CD4-positive, alpha-beta memory T cell (primary cell): ENCODE measurements at regions of chr11 and their contacts with region 1.

Region 1: DNA sequence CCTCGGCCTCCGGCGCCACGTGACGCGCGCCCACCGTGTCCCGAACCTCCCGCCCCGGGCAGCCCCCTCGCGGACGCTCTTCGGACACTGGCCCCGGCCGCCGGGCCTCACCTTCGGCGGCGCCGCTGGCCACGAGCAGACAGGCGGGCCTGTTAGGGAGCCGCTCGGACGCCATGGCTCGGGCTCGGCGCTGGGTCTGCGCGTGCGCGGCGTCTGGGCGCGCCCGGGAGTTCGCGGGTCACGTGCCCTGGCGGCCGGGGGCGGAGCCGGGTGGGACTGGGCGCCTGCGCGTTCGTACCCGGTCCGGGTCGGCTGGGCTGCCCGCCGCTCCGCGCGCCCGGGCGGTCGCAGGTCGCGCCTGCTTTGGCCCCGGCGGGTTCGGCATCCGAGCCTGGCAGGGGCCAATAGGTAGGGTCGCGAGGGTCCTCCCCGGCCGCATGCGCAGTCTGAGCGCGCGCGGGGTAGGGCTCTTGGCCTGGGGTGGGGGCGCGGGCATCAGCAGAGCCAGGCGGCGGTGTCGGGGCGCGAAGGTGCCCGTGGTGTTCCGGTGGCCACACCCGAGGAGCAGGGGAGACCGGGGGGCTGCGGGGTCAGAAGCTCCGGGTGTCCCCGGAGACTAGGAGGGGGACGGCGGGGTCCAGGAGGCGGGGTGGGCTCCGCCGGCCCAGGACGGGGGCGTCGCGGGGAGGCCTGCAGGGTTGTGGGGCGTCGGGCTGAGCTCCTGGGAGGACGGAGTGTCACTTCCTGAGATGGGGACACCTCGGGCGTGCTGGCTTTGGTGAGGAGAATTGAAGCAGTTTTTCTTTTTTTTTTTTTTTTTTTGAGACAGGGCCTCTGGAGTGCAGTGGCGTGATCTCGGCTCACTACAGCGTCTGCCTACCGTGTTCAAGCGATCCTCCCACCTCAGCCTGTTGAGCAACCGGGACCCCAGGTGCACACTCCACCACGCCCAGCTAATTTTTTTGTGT is at the start of gene GATD1:
- DNase-seq: peak; percentile 89 to 95 (median 92)
- H3K4me3 ChIP-seq: peak within 1 kb of the TSS; percentile 29 to 76
- H3K4me3 Mint-ChIP-seq: peak within 1 kb of the TSS; percentile 77 to 89 (median 87)
- H3K27ac ChIP-seq: peak within 1 kb of the TSS; percentile 67
- H3K27ac Mint-ChIP-seq: peak within 1 kb of the TSS; percentile 68 to 93 (median 87)
- H3K4me1 ChIP-seq: peaks cover 32% of the 10 kb centered on the region
- H3K4me1 Mint-ChIP-seq: peaks cover 3 to 36% (median 9%) of the 10 kb centered on the region in 4 donors
- H3K27me3 ChIP-seq: no peaks in the 10 kb centered on the region
- H3K27me3 Mint-ChIP-seq: no peaks in the 10 kb centered on the region
- total RNA-seq, gene GATD1: 51.5 to 64.9 TPM

Region 2: GRCh38 chr11:747158-748006 is 30.2 kb before region 1 on chr11 and contains the start of gene TALDO1:
- CTCF ChIA-PET with region 1: no interaction called
- POLR2A ChIA-PET with region 1: interaction called, 9 read pairs
- intact Hi-C with region 1: loop called (anchors 2 kb)
- DNase-seq: peak; percentile 62 to 80 (median 65)
- H3K4me3 ChIP-seq: peak within 1 kb of the TSS; percentile 58 to 87
- H3K4me3 Mint-ChIP-seq: peak within 1 kb of the TSS; percentile 82 to 89 (median 87)
- H3K27ac ChIP-seq: peak within 1 kb of the TSS; percentile 67
- H3K27ac Mint-ChIP-seq: peak within 1 kb of the TSS; percentile 79 to 92 (median 86)
- H3K4me1 ChIP-seq: peaks cover 31% of the 10 kb centered on the region
- H3K4me1 Mint-ChIP-seq: peaks cover 11 to 29% (median 21%) of the 10 kb centered on the region in 4 donors
- H3K27me3 ChIP-seq: no peaks in the 10 kb centered on the region
- H3K27me3 Mint-ChIP-seq: no peaks in the 10 kb centered on the region
- total RNA-seq, gene TALDO1: 80.4 to 90.5 TPM

Region 3: GRCh38 chr11:832321-833113 is 54.9 kb after region 1 on chr11 and contains the start of gene CD151:
- CTCF ChIA-PET with region 1: no interaction called
- POLR2A ChIA-PET with region 1: no interaction called
- intact Hi-C with region 1: no loop called
- DNase-seq: peak in 1 of 5 donors; percentile 45
- H3K4me3 ChIP-seq: peak within 1 kb of the TSS in 1 of 2 donors; percentile 43
- H3K4me3 Mint-ChIP-seq: peak within 1 kb of the TSS; percentile 51 to 82 (median 68)
- H3K27ac ChIP-seq: peak within 1 kb of the TSS; percentile 15
- H3K27ac Mint-ChIP-seq: peak within 1 kb of the TSS in 3 of 7 donors; percentile 19 to 63 (median 36)
- H3K4me1 ChIP-seq: peaks cover 52% of the 10 kb centered on the region
- H3K4me1 Mint-ChIP-seq: peaks cover 2 to 43% (median 19%) of the 10 kb centered on the region in 4 donors
- H3K27me3 ChIP-seq: peaks cover 3% of the 10 kb centered on the region
- H3K27me3 Mint-ChIP-seq: peaks cover 7 to 13% of the 10 kb centered on the region in 2 donors
- total RNA-seq, gene CD151: 20.7 to 23.4 TPM

Region 4: DNA sequence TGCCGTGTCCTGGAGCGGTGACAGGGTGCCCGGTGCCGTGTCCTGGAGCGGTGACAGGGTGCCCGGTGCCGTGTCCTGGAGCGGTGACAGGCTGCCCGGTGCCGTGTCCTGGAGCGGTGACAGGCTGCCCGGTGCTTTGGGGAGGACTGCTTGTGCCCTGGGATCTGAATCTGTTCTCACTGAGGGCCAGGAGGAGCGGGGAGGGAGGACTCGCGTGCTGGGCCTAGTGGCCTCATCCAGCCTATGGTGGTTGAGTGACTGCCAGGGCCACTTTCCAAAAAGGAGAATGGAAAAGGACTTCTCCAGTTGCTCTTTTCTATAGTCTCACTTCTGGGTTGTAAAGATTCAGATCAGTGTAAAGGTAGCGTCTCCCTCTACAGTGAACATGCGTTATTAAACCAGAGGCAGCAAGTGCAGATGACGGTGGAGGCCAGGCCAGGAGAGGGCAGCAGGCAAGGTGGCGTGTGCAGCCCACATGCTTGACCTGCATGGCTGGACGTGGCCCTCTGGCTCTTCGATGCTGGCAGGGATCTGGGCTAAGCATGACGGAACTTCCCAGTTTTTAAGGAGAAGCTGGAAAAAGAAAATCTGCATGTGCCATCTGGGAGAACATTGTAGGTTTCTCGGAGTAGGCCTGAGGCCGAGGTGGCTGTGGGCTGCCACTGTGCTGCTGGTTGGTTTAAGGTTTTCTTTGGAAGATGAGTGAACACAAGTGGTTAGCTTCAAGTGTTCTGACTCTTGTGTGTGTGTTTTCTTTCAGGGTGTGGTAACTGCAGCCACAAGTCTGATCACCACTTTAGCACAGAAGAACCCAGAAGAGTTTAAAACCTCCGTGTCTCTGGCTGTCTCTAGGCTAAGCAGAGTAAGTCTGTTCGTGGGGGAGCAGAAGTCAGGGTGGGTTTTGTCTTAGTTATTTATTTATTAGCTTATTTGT is 203.1 kb after region 1 on chr11:
- CTCF ChIA-PET with region 1: no interaction called
- POLR2A ChIA-PET with region 1: no interaction called
- intact Hi-C with region 1: no loop called
- DNase-seq: no peak
- H3K4me3 ChIP-seq: no peak overlapping the region
- H3K4me3 Mint-ChIP-seq: no peak overlapping the region
- H3K27ac ChIP-seq: no peak overlapping the region
- H3K27ac Mint-ChIP-seq: peak overlapping the region in 1 of 7 donors; percentile 74
- H3K4me1 ChIP-seq: no peaks in the 10 kb centered on the region
- H3K4me1 Mint-ChIP-seq: peaks cover 2 to 10% (median 7%) of the 10 kb centered on the region in 4 donors
- H3K27me3 ChIP-seq: no peaks in the 10 kb centered on the region
- H3K27me3 Mint-ChIP-seq: no peaks in the 10 kb centered on the region